Thyroid gland (tissue), 4 donors: ENCODE measurements at regions of chr1 and their contacts with region 1.

Region 1: DNA sequence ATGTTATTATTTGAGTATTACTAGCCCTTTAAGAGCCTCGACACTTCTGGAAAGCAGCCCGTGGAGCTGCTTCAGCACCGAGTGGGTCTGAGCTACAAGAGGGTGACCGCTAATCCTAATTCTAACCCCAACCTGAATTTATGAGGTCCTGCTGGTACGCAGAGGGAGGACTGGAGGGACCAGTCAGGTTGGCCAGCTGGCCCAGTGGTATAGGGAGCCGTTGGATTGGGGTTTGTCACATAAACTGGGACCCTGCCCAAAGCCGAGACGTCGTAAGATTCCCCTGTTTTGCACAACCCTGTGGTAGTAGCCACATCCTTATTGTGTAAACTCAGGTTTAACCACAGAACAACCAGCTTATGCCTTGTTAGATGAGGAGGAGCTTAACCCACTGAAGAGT is 60.8 kb upstream of the F3 start:
- DNase-seq: no peak
- H3K4me3 ChIP-seq: no peak overlapping the region
- H3K27ac ChIP-seq: no peak overlapping the region
- H3K4me1 ChIP-seq: peaks cover 6% of the 10 kb centered on the region in 2 donors
- H3K27me3 ChIP-seq: no peaks in the 10 kb centered on the region
- CTCF ChIP-seq: no peak
- POLR2A ChIP-seq: no peak

Region 2: GRCh38 chr1:94532077-94532476 is 70.2 kb before region 1 on chr1:
- intact Hi-C with region 1: loop called (anchors 10 kb)
- DNase-seq: no peak
- H3K4me3 ChIP-seq: no peak overlapping the region
- H3K27ac ChIP-seq: peak overlapping the region in 1 of 3 donors; percentile 39
- H3K4me1 ChIP-seq: peaks cover 8 to 17% of the 10 kb centered on the region in 2 donors
- H3K27me3 ChIP-seq: no peaks in the 10 kb centered on the region
- CTCF ChIP-seq: peak in 1 of 6 experiments; percentile 12
- POLR2A ChIP-seq: no peak